GM12878 (cell line): ENCODE measurements at regions of chr1 and their contacts with region 1.

Region 1: GRCh38 chr1:198850196-198850595 is 211.4 kb downstream of the PTPRC start:
- DNase-seq: no peak
- ATAC-seq: no peak
- H3K4me3 ChIP-seq: no peak overlapping the region
- H3K27ac ChIP-seq: no peak overlapping the region
- H3K4me1 ChIP-seq: no peaks in the 10 kb centered on the region
- H3K27me3 ChIP-seq: no peaks in the 10 kb centered on the region
- CTCF ChIP-seq: no peak
- EP300 ChIP-seq: no peak
- POLR2A ChIP-seq: no peak
- RAD21 ChIP-seq: no peak

Region 2: DNA sequence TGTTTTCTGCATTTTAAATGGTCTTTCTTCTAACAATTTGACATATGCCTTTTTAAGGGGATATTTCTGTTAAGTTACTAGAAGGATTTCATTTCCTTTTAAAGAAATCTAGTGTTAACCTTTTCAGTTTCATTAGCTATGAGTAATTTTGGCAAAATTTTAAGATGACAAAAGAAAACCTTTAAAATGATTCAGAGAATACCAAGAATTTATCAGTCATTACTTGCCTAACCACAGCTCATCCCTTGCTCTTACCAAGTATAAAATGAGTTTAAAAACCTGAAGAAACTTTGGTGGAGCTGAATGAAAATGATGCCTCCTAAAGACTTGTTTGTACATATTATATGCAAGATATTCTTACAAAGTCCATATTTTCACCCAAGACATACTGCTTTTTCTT is 591.7 kb before region 1 on chr1:
- CTCF ChIA-PET with region 1: no interaction called
- POLR2A ChIA-PET with region 1: no interaction called
- RAD21 ChIA-PET with region 1: no interaction called
- SMC1A ChIA-PET with region 1: no interaction called
- in situ Hi-C with region 1: no loop called
- intact Hi-C with region 1: no loop called
- DNase-seq: peak; percentile 26
- ATAC-seq: peak; percentile 68
- H3K4me3 ChIP-seq: no peak overlapping the region
- H3K27ac ChIP-seq: peak overlapping the region; percentile 47; the same call in 1 of the 2 replicates
- H3K4me1 ChIP-seq: peaks cover 14% of the 10 kb centered on the region
- H3K27me3 ChIP-seq: no peaks in the 10 kb centered on the region
- CTCF ChIP-seq: no peak
- EP300 ChIP-seq: no peak
- POLR2A ChIP-seq: no peak
- RAD21 ChIP-seq: 0 out of 2 replicates have a peak, but pooled peaks have one; percentile 9

Region 3: GRCh38 chr1:198798923-198799386 is 51.2 kb before region 1 on chr1:
- CTCF ChIA-PET with region 1: no interaction called
- POLR2A ChIA-PET with region 1: no interaction called
- RAD21 ChIA-PET with region 1: no interaction called
- SMC1A ChIA-PET with region 1: interaction called, 7 read pairs
- in situ Hi-C with region 1: no loop called
- intact Hi-C with region 1: loop called (anchors 5 kb)
- DNase-seq: peak; percentile 57
- ATAC-seq: peak; percentile 86
- H3K4me3 ChIP-seq: no peak overlapping the region
- H3K27ac ChIP-seq: no peak overlapping the region
- H3K4me1 ChIP-seq: no peaks in the 10 kb centered on the region
- H3K27me3 ChIP-seq: no peaks in the 10 kb centered on the region
- CTCF ChIP-seq: peak in 1 of 3 experiments; percentile 28; a peak in 1 of 6 replicates
- EP300 ChIP-seq: peak; percentile 18 to 25; a peak in 1 of 4 replicates
- POLR2A ChIP-seq: no peak
- RAD21 ChIP-seq: peak; percentile 27; the same call in 1 of the 2 replicates